Prostate gland (tissue), 2 donors: ENCODE measurements at regions of chr4 and their contacts with region 1.

Region 1: DNA sequence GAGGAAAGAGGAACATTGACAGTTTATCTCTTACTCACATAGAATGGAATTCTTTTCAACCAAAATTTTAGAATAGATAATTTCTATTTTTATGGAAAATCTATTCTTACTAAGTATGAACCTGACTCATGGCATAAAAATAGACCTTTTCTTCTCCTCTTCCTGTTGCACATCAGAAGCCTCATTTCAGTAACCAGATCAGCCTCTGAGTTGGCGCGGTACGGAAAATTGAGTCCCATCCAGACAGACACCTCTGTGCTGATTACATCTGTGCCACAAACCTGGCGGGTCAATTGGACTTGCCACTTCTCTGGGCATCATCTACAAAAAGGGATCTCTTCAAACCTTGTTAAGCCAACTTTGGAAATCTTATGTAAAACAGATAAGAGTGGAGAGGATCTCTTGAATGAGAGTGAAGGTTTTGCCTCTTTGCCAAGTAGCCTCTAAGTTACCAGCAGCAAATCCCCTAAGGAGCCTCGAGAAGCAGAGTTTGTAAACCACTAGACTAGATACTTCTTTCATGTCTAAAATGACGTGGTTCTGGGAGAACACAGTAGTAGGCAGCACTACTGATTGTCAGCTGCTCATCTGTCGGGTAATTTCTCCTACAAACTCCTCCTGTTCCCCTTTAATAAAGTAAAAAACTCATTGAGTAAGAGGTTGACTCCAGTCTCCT is 37.4 kb downstream of the TENM3 start:
- DNase-seq: no peak
- H3K4me3 ChIP-seq: no peak overlapping the region
- H3K27ac ChIP-seq: no peak overlapping the region
- H3K4me1 ChIP-seq: no peaks in the 10 kb centered on the region
- H3K27me3 ChIP-seq: no peaks in the 10 kb centered on the region
- CTCF ChIP-seq: no peak
- POLR2A ChIP-seq: no peak

Region 2: GRCh38 chr4:182189103-182189878 is 91.3 kb before region 1 on chr4:
- intact Hi-C with region 1: no loop called
- DNase-seq: no peak
- H3K4me3 ChIP-seq: no peak overlapping the region
- H3K27ac ChIP-seq: no peak overlapping the region
- H3K4me1 ChIP-seq: no peaks in the 10 kb centered on the region
- H3K27me3 ChIP-seq: no peaks in the 10 kb centered on the region
- CTCF ChIP-seq: no peak
- POLR2A ChIP-seq: no peak

Region 3: GRCh38 chr4:182303847-182304246 is 23.3 kb after region 1 on chr4:
- intact Hi-C with region 1: loop called (anchors 1 kb)
- DNase-seq: no peak
- H3K4me3 ChIP-seq: no peak overlapping the region
- H3K27ac ChIP-seq: no peak overlapping the region
- H3K4me1 ChIP-seq: no peaks in the 10 kb centered on the region
- H3K27me3 ChIP-seq: no peaks in the 10 kb centered on the region
- CTCF ChIP-seq: no peak
- POLR2A ChIP-seq: no peak

Region 4: GRCh38 chr4:182325848-182326255 is 45.3 kb after region 1 on chr4:
- intact Hi-C with region 1: no loop called
- DNase-seq: no peak
- H3K4me3 ChIP-seq: no peak overlapping the region
- H3K27ac ChIP-seq: no peak overlapping the region
- H3K4me1 ChIP-seq: no peaks in the 10 kb centered on the region
- H3K27me3 ChIP-seq: no peaks in the 10 kb centered on the region
- CTCF ChIP-seq: no peak
- POLR2A ChIP-seq: no peak